PC-3 (cell line): ENCODE measurements at regions of chr3 and their contacts with region 1.

Region 1: GRCh38 chr3:49171119-49171774 is at the start of gene KLHDC8B:
- DNase-seq: peak; percentile 81
- ATAC-seq: peak; percentile 91
- H3K4me3 ChIP-seq: peak within 1 kb of the TSS; percentile 74
- H3K27ac ChIP-seq: no peak within 1 kb of the TSS
- H3K4me1 ChIP-seq: peaks cover 18% of the 10 kb centered on the region
- H3K27me3 ChIP-seq: no peaks in the 10 kb centered on the region
- CTCF ChIP-seq: peak; percentile 97
- total RNA-seq, gene KLHDC8B: 24.3 and 34.4 TPM in 2 replicates

Region 2: GRCh38 chr3:49133226-49133951 is 37.9 kb before region 1 on chr3:
- CTCF ChIA-PET with region 1: no interaction called
- POLR2A ChIA-PET with region 1: no interaction called
- intact Hi-C with region 1: loop called (anchors 1 kb)
- DNase-seq: peak; percentile 90
- ATAC-seq: peak; percentile 76
- H3K4me3 ChIP-seq: peak overlapping the region; percentile 91
- H3K27ac ChIP-seq: peak overlapping the region; percentile 93
- H3K4me1 ChIP-seq: peaks cover 12% of the 10 kb centered on the region
- H3K27me3 ChIP-seq: no peaks in the 10 kb centered on the region
- CTCF ChIP-seq: no peak

Region 3: DNA sequence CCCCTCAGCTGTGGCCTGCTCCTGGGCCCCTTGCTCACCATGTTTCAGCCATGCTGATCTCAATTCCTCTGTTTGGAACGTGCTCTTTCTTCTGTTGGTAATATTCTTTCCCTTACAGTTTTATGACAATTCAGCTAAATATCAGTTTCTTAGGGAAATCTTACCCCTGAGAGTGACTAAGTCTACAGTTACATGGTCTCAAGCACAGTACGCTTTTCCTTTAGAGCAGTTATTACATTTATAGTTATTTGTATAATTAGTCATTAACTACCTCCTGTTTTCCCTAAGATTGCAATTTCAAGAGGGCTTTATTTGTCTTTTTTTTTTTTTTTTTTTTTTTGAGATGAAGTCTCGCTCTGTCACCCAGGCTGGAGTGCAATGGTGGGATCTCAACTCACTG is 82.3 kb after region 1 on chr3:
- CTCF ChIA-PET with region 1: no interaction called
- POLR2A ChIA-PET with region 1: no interaction called
- intact Hi-C with region 1: loop called (anchors 2 kb)
- DNase-seq: peak; percentile 59
- ATAC-seq: peak; percentile 85
- H3K4me3 ChIP-seq: no peak overlapping the region
- H3K27ac ChIP-seq: peak overlapping the region; percentile 83
- H3K4me1 ChIP-seq: peaks cover 21% of the 10 kb centered on the region
- H3K27me3 ChIP-seq: no peaks in the 10 kb centered on the region
- CTCF ChIP-seq: no peak

Region 4: GRCh38 chr3:49295489-49296058 is 124.3 kb after region 1 on chr3:
- CTCF ChIA-PET with region 1: no interaction called
- POLR2A ChIA-PET with region 1: no interaction called
- intact Hi-C with region 1: loop called (anchors 1 kb)
- DNase-seq: peak; percentile 65
- ATAC-seq: peak; percentile 31; the same call in 1 of the 2 replicates
- H3K4me3 ChIP-seq: no peak overlapping the region
- H3K27ac ChIP-seq: no peak overlapping the region
- H3K4me1 ChIP-seq: no peaks in the 10 kb centered on the region
- H3K27me3 ChIP-seq: no peaks in the 10 kb centered on the region
- CTCF ChIP-seq: peak; percentile 90

Region 5: GRCh38 chr3:49339945-49340800 is 168.9 kb after region 1 on chr3 and contains the start of gene USP4:
- CTCF ChIA-PET with region 1: interaction called, 5 read pairs
- POLR2A ChIA-PET with region 1: no interaction called
- intact Hi-C with region 1: loop called (anchors 5 kb)
- DNase-seq: peak; percentile 92
- ATAC-seq: peak; percentile 96
- H3K4me3 ChIP-seq: peak within 1 kb of the TSS; percentile 88
- H3K27ac ChIP-seq: peak within 1 kb of the TSS; percentile 32
- H3K4me1 ChIP-seq: peaks cover 19% of the 10 kb centered on the region
- H3K27me3 ChIP-seq: no peaks in the 10 kb centered on the region
- CTCF ChIP-seq: peak; percentile 33; the same call in 1 of the 2 replicates
- total RNA-seq, gene USP4: 19.9 and 22.8 TPM in 2 replicates

Region 6: DNA sequence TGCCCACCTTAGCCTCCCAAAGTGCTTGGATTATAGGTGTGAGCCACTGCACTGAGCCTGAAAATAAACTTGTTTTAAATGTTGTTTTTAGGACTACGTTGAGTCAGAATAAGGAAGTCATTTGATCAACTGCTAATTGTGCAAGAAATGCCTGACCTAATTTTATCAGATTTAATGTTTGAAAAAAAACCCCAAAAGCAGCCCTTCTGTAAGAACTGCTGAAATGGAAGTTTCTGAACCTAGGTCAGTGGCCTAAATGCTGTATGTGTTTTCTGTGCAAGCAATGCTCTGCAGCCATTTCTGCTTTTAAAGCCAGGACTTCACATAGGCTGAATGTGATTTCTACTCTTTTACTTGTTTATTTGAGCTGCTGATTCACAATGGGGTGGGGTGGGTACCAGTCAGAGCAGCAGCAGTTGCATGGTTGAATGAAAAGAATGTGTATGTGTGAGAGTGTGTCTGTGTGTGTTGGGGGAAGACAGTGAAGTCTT is 180.3 kb after region 1 on chr3:
- CTCF ChIA-PET with region 1: no interaction called
- POLR2A ChIA-PET with region 1: interaction called, 31 read pairs
- intact Hi-C with region 1: no loop called
- DNase-seq: peak; percentile 85
- ATAC-seq: peak; percentile 83
- H3K4me3 ChIP-seq: peak overlapping the region; percentile 3; the same call in 1 of the 2 replicates
- H3K27ac ChIP-seq: peak overlapping the region; percentile 66
- H3K4me1 ChIP-seq: peaks cover 36% of the 10 kb centered on the region
- H3K27me3 ChIP-seq: no peaks in the 10 kb centered on the region
- CTCF ChIP-seq: no peak